IMR-90 (cell line): ENCODE measurements at regions of chr4 and their contacts with region 1.

Region 1: GRCh38 chr4:1767770-1768366 is 25.2 kb upstream of the FGFR3 start:
- DNase-seq: peak; percentile 8
- ATAC-seq: peak; percentile 66
- H3K4me3 ChIP-seq: peak overlapping the region; percentile 49
- H3K27ac ChIP-seq: no peak overlapping the region
- H3K4me1 ChIP-seq: peaks cover 4% of the 10 kb centered on the region; the same call in 1 of the 2 replicates
- H3K27me3 ChIP-seq: no peaks in the 10 kb centered on the region; the same call in 1 of the 2 replicates
- CTCF ChIP-seq: peak; percentile 38
- POLR2A ChIP-seq: no peak
- RAD21 ChIP-seq: no peak

Region 2: GRCh38 chr4:519203-519651 is 1248.6 kb before region 1 on chr4:
- CTCF ChIA-PET with region 1: no interaction called
- POLR2A ChIA-PET with region 1: no interaction called
- dilution Hi-C with region 1: no loop called
- in situ Hi-C with region 1: no loop called
- intact Hi-C with region 1: no loop called
- DNase-seq: no peak
- ATAC-seq: no peak
- H3K4me3 ChIP-seq: no peak overlapping the region
- H3K27ac ChIP-seq: no peak overlapping the region
- H3K4me1 ChIP-seq: no peaks in the 10 kb centered on the region
- H3K27me3 ChIP-seq: no peaks in the 10 kb centered on the region
- CTCF ChIP-seq: no peak
- POLR2A ChIP-seq: no peak
- RAD21 ChIP-seq: no peak

Region 3: GRCh38 chr4:1693129-1693896 is 74.6 kb before region 1 on chr4:
- CTCF ChIA-PET with region 1: no interaction called
- POLR2A ChIA-PET with region 1: no interaction called
- dilution Hi-C with region 1: no loop called
- in situ Hi-C with region 1: no loop called
- intact Hi-C with region 1: no loop called
- DNase-seq: peak; percentile 72
- ATAC-seq: peak; percentile 94
- H3K4me3 ChIP-seq: no peak overlapping the region
- H3K27ac ChIP-seq: no peak overlapping the region
- H3K4me1 ChIP-seq: no peaks in the 10 kb centered on the region
- H3K27me3 ChIP-seq: no peaks in the 10 kb centered on the region
- CTCF ChIP-seq: peak; percentile 83
- POLR2A ChIP-seq: no peak
- RAD21 ChIP-seq: peak; percentile 68

Region 4: DNA sequence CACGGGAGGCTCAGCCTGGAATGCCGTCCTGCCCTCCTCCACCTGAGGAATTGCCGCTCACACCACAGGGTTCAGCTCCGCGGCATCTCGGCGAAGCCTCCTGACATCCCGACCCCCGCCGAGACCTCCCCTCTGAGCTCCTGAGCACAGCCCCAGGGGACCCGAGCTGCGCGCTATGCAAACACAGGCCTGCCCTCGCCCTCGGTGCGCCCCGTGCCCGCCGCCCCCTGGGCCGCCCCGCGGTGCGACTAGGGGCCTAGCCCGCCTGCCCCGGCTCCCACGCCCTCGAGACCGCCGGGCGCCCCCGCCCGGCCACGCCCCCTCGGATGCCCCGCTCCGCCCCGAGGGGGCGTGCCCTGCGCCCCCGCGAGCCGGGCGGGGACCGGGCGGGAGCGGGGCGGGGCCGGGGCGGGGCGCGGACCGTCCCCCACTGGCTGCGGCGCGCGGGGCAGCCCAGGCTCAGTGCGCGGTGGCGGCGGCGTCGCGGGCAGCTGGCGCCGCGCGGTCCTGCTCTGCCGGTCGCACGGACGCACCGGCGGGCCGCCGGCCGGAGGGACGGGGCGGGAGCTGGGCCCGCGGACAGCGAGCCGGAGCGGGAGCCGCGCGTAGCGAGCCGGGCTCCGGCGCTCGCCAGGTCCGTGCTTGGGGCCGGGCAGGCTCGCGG is 25.1 kb after region 1 on chr4 and contains the start of gene FGFR3:
- CTCF ChIA-PET with region 1: no interaction called
- POLR2A ChIA-PET with region 1: interaction called, 13 read pairs
- dilution Hi-C with region 1: no loop called
- in situ Hi-C with region 1: no loop called
- intact Hi-C with region 1: no loop called
- DNase-seq: no peak
- ATAC-seq: peak; percentile 92
- H3K4me3 ChIP-seq: peak within 1 kb of the TSS; percentile 65
- H3K27ac ChIP-seq: no peak within 1 kb of the TSS
- H3K4me1 ChIP-seq: peaks cover 2% of the 10 kb centered on the region; the same call in 1 of the 2 replicates
- H3K27me3 ChIP-seq: peaks cover 54% of the 10 kb centered on the region
- CTCF ChIP-seq: no peak
- POLR2A ChIP-seq: no peak
- RAD21 ChIP-seq: no peak
- total RNA-seq, gene FGFR3: 0.18 and 0.28 TPM in 2 replicates